Heart right ventricle (tissue), 16 donors: ENCODE measurements at regions of chr10 and their contacts with region 1.

Region 1: GRCh38 chr10:73096449-73097304 is at the start of gene P4HA1:
- DNase-seq: peak; percentile 99 to 100
- ATAC-seq: peak; percentile 97 to 98 (median 98)
- H3K4me3 ChIP-seq: peak within 1 kb of the TSS; percentile 76 to 92 (median 85)
- H3K27ac ChIP-seq: peak within 1 kb of the TSS; percentile 94 to 99 (median 96)
- H3K4me1 ChIP-seq: peaks cover 0 to 51% (median 38%) of the 10 kb centered on the region in 9 donors
- H3K27me3 ChIP-seq: no peaks in the 10 kb centered on the region
- CTCF ChIP-seq: peak; percentile 33 to 92 (median 69)
- total RNA-seq, gene P4HA1: 44.4 to 67.3 (median 51.5) TPM

Region 2: GRCh38 chr10:73110345-73110849 is 13.7 kb after region 1 on chr10 and contains the start of gene NUDT13:
- intact Hi-C with region 1: loop called in 3 of 10 experiments (anchors 1 to 2 kb)
- DNase-seq: peak; percentile 36 to 90
- ATAC-seq: peak; percentile 87 to 98 (median 98)
- H3K4me3 ChIP-seq: peak within 1 kb of the TSS; percentile 2 to 91 (median 54)
- H3K27ac ChIP-seq: peak within 1 kb of the TSS; percentile 78 to 95 (median 90)
- H3K4me1 ChIP-seq: peaks cover 0 to 29% (median 10%) of the 10 kb centered on the region in 9 donors
- H3K27me3 ChIP-seq: no peaks in the 10 kb centered on the region
- CTCF ChIP-seq: no peak
- total RNA-seq, gene NUDT13: 1.8 to 5.2 (median 4.0) TPM

Region 3: GRCh38 chr10:73159038-73159648 is 62.5 kb after region 1 on chr10:
- intact Hi-C with region 1: loop called in 9 of 10 experiments (anchors 1 to 10 kb)
- DNase-seq: peak; percentile 33 to 47
- ATAC-seq: peak in 1 of 8 donors; percentile 56
- H3K4me3 ChIP-seq: no peak overlapping the region
- H3K27ac ChIP-seq: no peak overlapping the region
- H3K4me1 ChIP-seq: peaks cover 0 to 38% (median 27%) of the 10 kb centered on the region in 9 donors
- H3K27me3 ChIP-seq: no peaks in the 10 kb centered on the region
- CTCF ChIP-seq: peak; percentile 40 to 86 (median 81)

Region 4: GRCh38 chr10:73167783-73168464 is 71.2 kb after region 1 on chr10 and contains the starts of genes ECD and FAM149B1:
- intact Hi-C with region 1: loop called in 4 of 10 experiments (anchors 5 to 10 kb)
- DNase-seq: peak; percentile 92 to 96
- ATAC-seq: peak; percentile 97 to 99 (median 99)
- H3K4me3 ChIP-seq: peak within 1 kb of the TSS; percentile 71 to 95 (median 86)
- H3K27ac ChIP-seq: peak within 1 kb of the TSS; percentile 87 to 98 (median 94)
- H3K4me1 ChIP-seq: peaks cover 0 to 52% (median 43%) of the 10 kb centered on the region in 9 donors
- H3K27me3 ChIP-seq: no peaks in the 10 kb centered on the region
- CTCF ChIP-seq: peak in 3 of 9 donors; percentile 25 to 39 (median 36)
- total RNA-seq, gene ECD: 14.0 to 22.9 (median 19.0) TPM
- total RNA-seq, gene FAM149B1: 12.2 to 19.7 (median 16.7) TPM